ENCODE measurements at regions of chr18 and their contacts with region 1.

Region 1: GRCh38 chr18:12391618-12392165 is 14.7 kb upstream of the AFG3L2 start:
- DNase-seq: no peak
- H3K4me3 ChIP-seq: no peak overlapping the region
- CTCF ChIP-seq: peak; percentile 79

Region 2: GRCh38 chr18:12408247-12408869 is 16.7 kb after region 1 on chr18:
- CTCF ChIA-PET with region 1: interaction called, 48 read pairs
- POLR2A ChIA-PET with region 1: no interaction called
- DNase-seq: no peak
- H3K4me3 ChIP-seq: peak overlapping the region; percentile 69
- CTCF ChIP-seq: no peak

Region 3: DNA sequence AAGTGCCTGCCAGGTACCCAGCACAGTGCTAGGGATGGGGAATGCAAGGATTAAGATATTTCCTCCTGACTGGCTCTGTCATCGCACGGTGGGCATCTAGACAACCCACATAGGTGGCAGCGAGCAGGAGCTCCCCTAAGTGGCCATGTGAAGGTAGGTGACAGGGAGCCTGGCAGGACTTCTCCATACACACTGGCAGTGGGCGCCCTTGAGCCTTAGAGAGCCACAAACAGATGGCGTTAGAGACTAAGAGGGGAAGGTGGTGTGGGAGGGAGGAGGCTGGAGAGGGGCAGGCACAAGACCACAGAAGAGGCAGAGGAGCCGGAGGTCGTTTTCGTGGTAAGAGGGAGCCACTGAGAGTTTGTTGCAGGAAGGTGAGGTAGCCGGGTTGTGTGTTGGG is 31.2 kb after region 1 on chr18:
- CTCF ChIA-PET with region 1: interaction called, 16 read pairs
- POLR2A ChIA-PET with region 1: no interaction called
- DNase-seq: no peak
- H3K4me3 ChIP-seq: no peak overlapping the region
- CTCF ChIP-seq: no peak

Region 4: GRCh38 chr18:12679183-12679786 is 287.6 kb after region 1 on chr18:
- CTCF ChIA-PET with region 1: interaction called, 18 read pairs
- POLR2A ChIA-PET with region 1: no interaction called
- DNase-seq: no peak
- H3K4me3 ChIP-seq: no peak overlapping the region
- CTCF ChIP-seq: no peak

Region 5: DNA sequence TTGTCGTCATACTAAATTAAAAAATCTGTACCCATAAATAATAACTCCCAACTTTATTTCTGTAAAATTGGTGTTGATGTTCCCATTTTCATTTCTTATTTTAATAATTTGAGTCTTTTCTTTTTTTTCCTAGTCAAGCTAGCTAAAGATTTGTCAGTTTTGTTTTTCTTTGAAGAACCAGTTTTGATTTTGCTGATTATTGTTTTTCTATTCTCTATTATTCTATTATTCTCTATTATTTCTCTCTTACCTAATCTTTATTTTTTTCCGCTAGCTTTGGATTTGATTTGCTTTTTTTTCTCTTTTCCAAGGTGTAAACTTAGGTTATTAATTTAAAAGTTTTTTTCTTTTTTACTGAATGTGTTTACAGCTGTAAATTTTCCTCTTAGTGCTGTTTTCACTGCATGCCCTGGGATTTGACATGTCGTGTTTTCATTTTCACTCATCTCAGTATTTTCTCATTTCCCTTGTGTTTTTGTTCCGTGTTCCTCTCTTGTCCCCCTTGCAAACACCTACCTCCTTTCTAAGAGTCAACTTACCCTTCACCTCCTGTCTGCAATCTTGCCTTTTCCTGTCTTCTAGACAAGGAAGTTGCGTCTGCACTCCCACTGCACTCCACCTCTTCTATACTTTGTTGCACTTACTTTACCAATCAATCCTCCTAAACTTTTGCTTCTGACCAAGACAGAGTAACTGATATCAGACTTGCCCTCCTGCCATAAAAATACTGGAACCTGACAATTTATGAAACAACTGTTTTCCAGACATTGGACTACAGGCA is 330.0 kb after region 1 on chr18:
- CTCF ChIA-PET with region 1: interaction called, 10 read pairs
- POLR2A ChIA-PET with region 1: no interaction called
- DNase-seq: no peak
- H3K4me3 ChIP-seq: no peak overlapping the region
- CTCF ChIP-seq: no peak